Endothelial cell of umbilical vein (primary cell): ENCODE measurements at regions of chr19 and their contacts with region 1.

Region 1: GRCh38 chr19:1275260-1275975 is at the start of gene FAM174C:
- DNase-seq: peak; percentile 96
- H3K4me3 ChIP-seq: peak within 1 kb of the TSS; percentile 9 to 78 (median 53)
- H3K27ac ChIP-seq: peak within 1 kb of the TSS; percentile 95
- H3K4me1 ChIP-seq: peaks cover 29% of the 10 kb centered on the region
- H3K27me3 ChIP-seq: no peaks in the 10 kb centered on the region
- CTCF ChIP-seq: no peak
- POLR2A ChIP-seq: peak; percentile 91
- total RNA-seq, gene FAM174C: 46.7 and 47.5 TPM in 2 replicates

Region 2: DNA sequence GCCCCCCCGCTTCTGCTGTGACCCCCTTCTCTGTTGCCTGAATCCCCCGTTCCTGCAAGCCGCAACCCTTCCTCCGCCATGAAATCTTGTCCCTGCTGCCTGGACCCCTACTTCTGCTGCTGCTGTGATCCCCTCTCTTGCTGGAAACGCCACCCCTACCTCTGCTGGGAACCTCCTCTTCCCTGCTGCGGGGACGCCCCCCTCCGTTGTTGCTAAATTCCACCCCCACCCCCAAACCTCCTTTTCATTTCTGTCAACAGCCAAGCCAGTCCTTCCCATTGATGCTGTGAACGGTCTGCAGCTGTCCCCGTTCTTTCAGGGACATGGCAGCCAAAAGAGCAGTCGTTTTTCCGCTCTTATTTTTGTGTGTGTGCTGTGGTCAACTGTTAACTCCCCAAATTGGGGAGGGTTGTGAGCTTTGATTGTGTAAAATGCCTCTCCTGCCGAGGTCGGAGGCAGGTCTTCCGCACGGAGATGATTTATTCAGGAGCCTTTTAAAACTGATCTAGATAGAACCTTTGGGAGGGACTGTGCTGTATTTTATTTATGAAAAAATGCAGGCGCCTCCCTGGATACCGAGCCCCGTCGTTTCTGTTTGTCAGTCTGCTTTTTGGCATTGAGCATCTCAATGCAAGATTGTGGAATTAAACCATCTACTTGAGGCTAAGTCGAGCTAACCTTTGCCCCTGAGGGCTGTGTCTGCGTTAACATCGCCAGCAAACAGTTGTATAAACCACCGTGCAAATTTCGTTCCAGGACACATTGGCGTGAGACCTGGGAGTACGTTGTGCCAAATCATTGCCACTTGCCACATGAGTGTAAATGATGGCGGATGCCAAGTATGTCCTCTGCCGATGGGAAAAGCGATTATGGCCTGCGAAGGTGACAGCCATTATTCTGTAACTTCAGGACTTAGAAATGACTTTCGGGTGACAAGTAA is 80.4 kb after region 1 on chr19:
- CTCF ChIA-PET with region 1: interaction called, 5 read pairs
- POLR2A ChIA-PET with region 1: interaction called, 3 read pairs
- dilution Hi-C with region 1: no loop called
- intact Hi-C with region 1: loop called (anchors 1 kb)
- DNase-seq: peak; percentile 30
- H3K4me3 ChIP-seq: peak overlapping the region; percentile 55 to 95 (median 78)
- H3K27ac ChIP-seq: no peak overlapping the region
- H3K4me1 ChIP-seq: peaks cover 16% of the 10 kb centered on the region
- H3K27me3 ChIP-seq: no peaks in the 10 kb centered on the region
- CTCF ChIP-seq: no peak
- POLR2A ChIP-seq: no peak

Region 3: DNA sequence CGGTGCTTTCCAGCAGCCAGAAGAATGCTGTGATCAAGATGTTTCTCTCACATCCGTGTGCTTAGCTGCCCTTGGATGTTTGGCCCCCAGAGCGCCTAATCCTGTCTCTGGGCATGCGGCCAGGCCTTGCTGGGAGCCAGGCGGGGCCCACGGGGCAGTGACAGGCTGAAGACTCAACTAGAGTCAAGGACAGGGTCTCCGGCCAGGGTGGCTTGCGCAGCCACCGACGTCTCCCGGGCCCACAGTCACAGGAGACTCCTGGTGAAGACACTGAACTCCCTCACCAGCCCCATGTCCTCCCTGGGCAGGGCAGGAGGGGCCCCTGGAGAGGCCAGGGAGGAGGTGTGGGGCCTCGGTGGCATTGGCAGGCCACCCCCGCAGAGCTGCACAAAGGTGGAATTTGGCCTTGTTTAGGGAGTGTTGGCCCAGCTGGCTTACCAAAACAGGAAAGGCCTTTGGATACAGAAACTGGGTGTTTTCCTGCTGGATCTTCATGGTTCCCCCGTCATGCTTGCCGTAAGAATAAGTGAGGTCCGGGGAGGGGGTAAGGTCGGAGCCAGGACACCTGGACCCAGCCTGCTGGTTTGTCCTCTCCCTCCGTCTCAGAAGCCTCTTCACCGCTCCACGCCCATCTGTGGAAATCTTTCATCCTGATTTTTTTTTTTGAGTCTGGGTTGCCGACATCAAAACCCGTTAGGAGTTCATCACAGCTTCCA is 98.3 kb after region 1 on chr19:
- CTCF ChIA-PET with region 1: interaction called, 13 read pairs
- POLR2A ChIA-PET with region 1: no interaction called
- dilution Hi-C with region 1: no loop called
- intact Hi-C with region 1: loop called (anchors 1 kb)
- DNase-seq: no peak
- H3K4me3 ChIP-seq: no peak overlapping the region
- H3K27ac ChIP-seq: no peak overlapping the region
- H3K4me1 ChIP-seq: no peaks in the 10 kb centered on the region
- H3K27me3 ChIP-seq: no peaks in the 10 kb centered on the region
- CTCF ChIP-seq: no peak
- POLR2A ChIP-seq: no peak

Region 4: GRCh38 chr19:1383311-1384084 is 108.1 kb after region 1 on chr19 and contains the start of gene NDUFS7:
- CTCF ChIA-PET with region 1: interaction called, 13 read pairs
- POLR2A ChIA-PET with region 1: no interaction called
- dilution Hi-C with region 1: no loop called
- intact Hi-C with region 1: loop called (anchors 1 kb)
- DNase-seq: peak; percentile 89
- H3K4me3 ChIP-seq: peak within 1 kb of the TSS; percentile 69 to 84 (median 73)
- H3K27ac ChIP-seq: peak within 1 kb of the TSS; percentile 18
- H3K4me1 ChIP-seq: peaks cover 7% of the 10 kb centered on the region
- H3K27me3 ChIP-seq: no peaks in the 10 kb centered on the region
- CTCF ChIP-seq: peak in 1 of 2 donors; percentile 21
- POLR2A ChIP-seq: no peak
- total RNA-seq, gene NDUFS7: 95.8 and 101 TPM in 2 replicates

Region 5: DNA sequence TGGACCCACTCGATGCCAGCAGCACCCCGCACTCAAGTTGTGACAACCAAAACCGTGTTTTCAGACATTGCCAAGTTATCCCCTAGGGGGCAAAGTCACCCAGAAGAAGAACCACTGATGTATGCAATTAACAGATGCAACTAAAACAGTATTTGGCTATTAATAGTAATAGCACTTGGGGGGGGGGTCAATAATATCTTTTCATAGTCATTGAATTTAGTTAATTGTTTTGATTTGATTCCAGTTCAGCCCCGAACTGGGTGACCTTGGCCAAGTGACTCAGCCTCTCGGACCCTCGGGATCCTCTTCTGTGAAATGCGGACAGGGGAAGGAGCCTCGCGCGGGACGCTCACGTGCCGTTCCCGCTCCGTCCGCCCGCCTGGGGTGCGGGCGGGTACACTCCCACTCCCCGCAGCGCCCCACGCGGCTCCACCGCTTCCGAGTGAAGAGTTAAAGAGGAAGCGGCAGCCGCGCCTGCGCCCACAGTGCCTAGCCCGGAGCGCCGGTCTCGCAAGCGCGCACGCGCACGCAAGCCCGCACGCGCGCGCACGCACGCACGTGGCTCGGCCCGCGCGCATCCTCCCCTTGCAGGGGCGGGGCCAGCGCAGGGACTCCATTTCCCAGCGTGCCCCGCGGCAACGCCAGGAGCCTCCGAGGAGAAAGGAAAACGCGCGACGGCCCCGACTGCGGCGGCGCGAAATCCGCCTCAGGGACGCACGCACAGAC is 131.5 kb after region 1 on chr19:
- CTCF ChIA-PET with region 1: no interaction called
- POLR2A ChIA-PET with region 1: no interaction called
- dilution Hi-C with region 1: no loop called
- intact Hi-C with region 1: loop called (anchors 2 kb)
- DNase-seq: peak; percentile 99
- H3K4me3 ChIP-seq: peak overlapping the region; percentile 53 to 61 (median 57)
- H3K27ac ChIP-seq: peak overlapping the region; percentile 42
- H3K4me1 ChIP-seq: peaks cover 26% of the 10 kb centered on the region
- H3K27me3 ChIP-seq: no peaks in the 10 kb centered on the region
- CTCF ChIP-seq: peak in 1 of 2 donors; percentile 55
- POLR2A ChIP-seq: peak; percentile 81

Region 6: DNA sequence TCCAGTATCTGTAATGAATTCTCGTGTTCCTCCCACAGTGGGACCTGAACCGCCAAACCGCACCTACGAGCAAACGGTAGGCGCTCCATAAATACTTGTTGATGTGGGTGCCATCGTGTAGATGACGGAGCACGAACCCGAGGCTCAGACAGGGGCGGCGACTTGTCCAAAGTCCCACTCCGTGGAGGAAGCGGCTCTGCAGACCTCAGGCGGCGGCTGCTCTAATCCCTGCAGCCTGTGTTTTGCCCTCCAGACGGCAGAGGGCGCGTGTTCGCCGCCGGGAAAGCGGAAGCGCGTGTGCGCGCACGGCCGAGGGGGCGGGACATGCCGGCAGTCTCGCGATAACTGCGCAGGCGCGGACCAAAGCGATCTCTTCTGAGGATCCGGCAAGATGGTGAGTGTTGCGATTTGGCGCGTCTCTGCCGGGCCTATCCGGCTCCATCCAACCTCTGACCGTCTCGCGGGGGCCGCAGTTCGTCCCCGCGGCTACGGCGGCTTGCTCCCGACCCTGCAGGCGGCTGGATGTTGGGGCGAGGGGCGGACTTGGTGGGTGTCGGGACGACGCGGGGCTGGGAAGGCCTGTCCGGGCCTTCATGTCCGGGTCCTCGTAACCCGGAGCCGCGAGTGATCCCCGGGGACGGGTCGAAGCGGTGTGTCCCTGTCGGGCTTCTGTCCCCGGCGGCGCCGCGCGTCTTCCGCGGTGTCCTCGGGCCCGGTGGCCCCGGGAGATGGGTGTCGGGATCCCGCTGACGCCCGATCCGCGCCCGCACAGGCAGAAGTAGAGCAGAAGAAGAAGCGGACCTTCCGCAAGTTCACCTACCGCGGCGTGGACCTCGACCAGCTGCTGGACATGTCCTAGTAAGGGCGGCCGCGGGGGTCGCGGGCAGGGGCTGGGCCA is 162.9 kb after region 1 on chr19 and contains the start of gene RPS15:
- CTCF ChIA-PET with region 1: interaction called, 6 read pairs
- POLR2A ChIA-PET with region 1: no interaction called
- dilution Hi-C with region 1: no loop called
- intact Hi-C with region 1: loop called (anchors 1 kb)
- DNase-seq: peak; percentile 98
- H3K4me3 ChIP-seq: peak within 1 kb of the TSS; percentile 75 to 89 (median 85)
- H3K27ac ChIP-seq: peak within 1 kb of the TSS; percentile 89
- H3K4me1 ChIP-seq: peaks cover 6% of the 10 kb centered on the region
- H3K27me3 ChIP-seq: no peaks in the 10 kb centered on the region
- CTCF ChIP-seq: peak; percentile 96 to 98
- POLR2A ChIP-seq: peak; percentile 99
- total RNA-seq, gene RPS15: 1,260 and 1,287 TPM in 2 replicates

Region 7: DNA sequence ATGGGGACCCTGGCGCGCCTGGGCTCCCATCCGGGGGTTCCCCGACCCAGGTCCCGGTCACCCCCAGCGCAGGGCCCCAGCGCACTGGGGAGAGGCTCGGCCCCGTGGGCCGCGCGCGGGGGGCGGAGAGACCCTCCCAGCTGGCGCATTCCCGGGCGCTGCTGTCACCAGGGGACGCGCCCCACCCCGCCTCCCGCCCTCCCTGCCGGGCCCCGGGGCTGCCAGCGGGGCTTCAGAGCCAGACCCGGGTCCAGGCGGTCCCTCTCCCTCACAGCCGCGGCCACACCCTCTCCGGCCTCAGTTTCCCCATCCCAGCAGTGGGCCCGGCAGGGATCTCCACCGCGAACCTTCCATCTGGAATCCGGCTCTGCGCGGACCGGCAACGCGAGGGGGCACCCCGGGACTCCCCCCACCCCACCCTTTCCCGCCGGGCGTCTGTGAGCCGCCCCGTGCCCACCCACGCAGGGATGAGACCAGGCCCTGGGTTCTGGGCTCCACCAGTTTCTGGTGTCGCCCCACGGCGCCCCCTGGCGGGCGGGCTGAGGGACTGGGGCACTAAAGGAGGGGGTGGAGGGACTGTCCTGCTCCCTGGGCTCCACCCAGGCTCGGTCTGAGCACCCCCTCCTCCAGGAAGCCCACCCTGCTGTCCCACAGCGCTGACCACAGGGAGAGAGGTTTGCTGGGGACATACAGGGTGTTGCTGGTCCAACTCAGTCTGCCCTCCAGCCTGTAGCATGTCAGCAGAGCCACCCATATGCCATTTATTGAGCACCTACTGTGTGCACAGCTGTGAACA is 238.3 kb after region 1 on chr19:
- CTCF ChIA-PET with region 1: interaction called, 4 read pairs
- POLR2A ChIA-PET with region 1: no interaction called
- dilution Hi-C with region 1: no loop called
- intact Hi-C with region 1: loop called (anchors 5 kb)
- DNase-seq: no peak
- H3K4me3 ChIP-seq: no peak overlapping the region
- H3K27ac ChIP-seq: no peak overlapping the region
- H3K4me1 ChIP-seq: no peaks in the 10 kb centered on the region
- H3K27me3 ChIP-seq: peaks cover 5 to 8% of the 10 kb centered on the region in 2 experiments
- CTCF ChIP-seq: peak; percentile 40 to 70
- POLR2A ChIP-seq: no peak